ENCODE measurements at regions of chr1 and their contacts with region 1.

Region 1: DNA sequence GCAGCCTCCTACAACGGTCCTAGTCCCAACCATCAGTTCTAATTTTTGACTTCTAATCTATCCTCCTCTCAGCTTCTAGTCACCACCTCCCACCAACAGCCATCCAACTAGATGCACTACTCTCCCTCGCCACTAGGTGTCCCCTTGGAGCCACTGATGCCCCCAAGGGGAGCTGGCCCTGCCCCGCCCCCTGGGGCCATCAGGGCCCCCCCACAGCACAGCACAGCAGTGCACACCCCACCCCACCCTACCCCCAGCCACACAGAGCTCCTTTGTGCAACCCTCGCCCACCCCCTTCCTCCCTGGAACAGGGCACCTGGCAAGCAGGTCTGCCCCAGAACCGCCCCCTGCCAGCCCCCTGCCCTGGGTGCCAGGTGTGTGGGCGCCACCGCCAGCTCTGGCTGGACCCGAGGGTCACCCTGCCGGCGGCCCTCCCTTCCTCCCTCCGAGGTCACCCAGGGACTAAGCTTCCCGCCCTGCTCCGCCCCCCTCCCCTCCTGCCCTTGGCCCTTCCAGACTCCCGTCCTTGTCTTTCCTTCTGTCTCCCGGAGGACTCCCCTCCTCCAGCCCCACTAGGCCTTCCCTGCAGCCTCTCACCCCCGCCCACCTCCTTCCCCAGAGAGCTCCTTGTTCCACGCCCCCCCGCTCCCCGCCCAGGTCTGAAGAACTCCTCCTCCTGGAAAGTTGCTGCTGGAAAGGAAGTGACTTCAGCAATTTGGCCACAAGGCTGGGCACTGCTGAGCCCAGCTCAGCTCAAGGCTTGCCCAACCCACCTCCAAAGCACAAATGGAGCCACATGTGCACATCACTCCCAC is 47.0 kb downstream of the AHDC1 start:
- DNase-seq: peak; percentile 91 to 97 (median 94)
- ATAC-seq: peak; percentile 85
- H3K4me3 ChIP-seq: no peak overlapping the region
- H3K27ac ChIP-seq: peak overlapping the region; percentile 73 to 80 (median 78)
- H3K4me1 ChIP-seq: peaks cover 33% of the 10 kb centered on the region
- H3K27me3 ChIP-seq: no peaks in the 10 kb centered on the region
- CTCF ChIP-seq: peak; percentile 84 to 94 (median 93)
- POLR2A ChIP-seq: peak in 1 of 3 donors; percentile 9

Region 2: DNA sequence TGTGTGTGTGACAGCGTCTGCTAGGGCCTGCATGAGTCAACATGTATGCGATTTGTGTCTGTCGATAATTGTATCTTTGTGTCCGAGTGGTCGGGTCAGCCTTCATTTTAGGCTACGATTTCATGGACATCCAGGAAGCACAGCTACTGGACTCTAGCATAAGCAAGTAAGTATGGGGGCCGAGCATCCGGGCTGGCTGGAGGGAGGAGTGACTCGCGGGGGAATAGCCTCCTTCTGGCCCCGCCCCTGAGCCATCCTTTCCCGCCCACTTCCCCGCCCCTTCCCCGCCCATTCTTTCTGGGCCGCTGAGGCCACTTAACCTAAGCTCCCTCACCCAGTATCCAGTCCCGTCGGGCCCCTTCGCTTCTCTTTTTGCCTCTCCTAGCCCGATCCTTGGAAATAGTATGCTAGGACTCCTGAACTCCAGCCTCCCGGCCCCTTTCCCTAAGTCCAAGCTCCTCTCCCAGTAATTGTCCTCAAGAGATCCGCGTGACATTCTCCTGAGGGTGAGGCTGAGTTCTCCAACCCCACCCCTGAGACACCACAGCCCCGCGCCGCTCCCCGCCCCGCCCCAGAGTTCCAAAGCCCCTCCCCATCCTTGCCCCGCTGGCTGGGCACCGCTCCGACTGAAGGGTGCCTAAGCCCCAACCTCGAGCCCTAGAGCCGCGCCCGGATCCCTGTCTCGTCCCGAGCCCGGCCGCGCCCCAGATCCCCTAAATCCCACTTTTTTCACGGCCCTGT is 191.4 kb before region 1 on chr1:
- intact Hi-C with region 1: no loop called
- DNase-seq: peak; percentile 86 to 89 (median 88)
- ATAC-seq: peak; percentile 74
- H3K4me3 ChIP-seq: peak overlapping the region; percentile 16 to 18
- H3K27ac ChIP-seq: peak overlapping the region; percentile 57 to 90 (median 78)
- H3K4me1 ChIP-seq: peaks cover 27% of the 10 kb centered on the region
- H3K27me3 ChIP-seq: no peaks in the 10 kb centered on the region
- CTCF ChIP-seq: no peak
- POLR2A ChIP-seq: peak in 2 of 3 donors; percentile 68 to 69

Region 3: GRCh38 chr1:27504588-27505419 is 52.2 kb before region 1 on chr1:
- intact Hi-C with region 1: no loop called
- DNase-seq: peak; percentile 31 to 59 (median 58)
- ATAC-seq: peak; percentile 74
- H3K4me3 ChIP-seq: no peak overlapping the region
- H3K27ac ChIP-seq: peak overlapping the region; percentile 47 to 76 (median 66)
- H3K4me1 ChIP-seq: peaks cover 11% of the 10 kb centered on the region
- H3K27me3 ChIP-seq: no peaks in the 10 kb centered on the region
- CTCF ChIP-seq: no peak
- POLR2A ChIP-seq: no peak

Region 4: GRCh38 chr1:27598902-27599528 is 42.0 kb after region 1 on chr1:
- intact Hi-C with region 1: loop called (anchors 5 kb)
- DNase-seq: peak in 3 of 4 donors; percentile 50 to 74 (median 57)
- ATAC-seq: no peak
- H3K4me3 ChIP-seq: no peak overlapping the region
- H3K27ac ChIP-seq: peak overlapping the region in 3 of 4 donors; percentile 35 to 59 (median 43)
- H3K4me1 ChIP-seq: peaks cover 50% of the 10 kb centered on the region
- H3K27me3 ChIP-seq: no peaks in the 10 kb centered on the region
- CTCF ChIP-seq: no peak
- POLR2A ChIP-seq: no peak

Measured in body of pancreas (tissue), 4 donors.